A549 (cell line): ENCODE measurements at regions of chr17 and their contacts with region 1.

Region 1: DNA sequence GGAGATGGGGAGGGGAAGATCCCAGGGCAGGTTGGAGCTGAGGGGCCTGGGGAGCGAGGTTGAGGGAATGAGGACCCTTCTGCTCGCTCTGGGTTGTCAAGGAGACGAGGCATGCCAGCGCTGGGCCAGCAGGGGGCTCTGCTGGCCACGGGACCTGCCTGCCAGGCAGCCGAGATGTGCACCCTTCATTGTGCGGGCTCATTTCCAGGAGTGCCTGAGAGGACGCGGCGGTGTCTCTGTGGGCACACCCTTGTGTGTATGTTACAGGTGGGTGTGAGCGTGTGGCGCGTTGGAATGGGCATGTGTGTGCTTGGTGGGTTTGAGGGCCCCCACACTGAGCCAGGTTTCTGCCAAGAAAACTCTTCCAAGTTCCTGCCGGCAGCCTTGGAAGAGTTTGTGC is 15.9 kb downstream of the ARHGAP23 start:
- DNase-seq: peak; percentile 71 to 91
- ATAC-seq: peak; percentile 91 to 97
- H3K4me3 ChIP-seq: no peak overlapping the region
- H3K27ac ChIP-seq: peak overlapping the region in 1 of 2 experiments; percentile 59; a peak in 2 of 6 replicates
- H3K4me1 ChIP-seq: peaks cover 29% of the 10 kb centered on the region
- CTCF ChIP-seq: peak; percentile 96
- EP300 ChIP-seq: no peak
- POLR2A ChIP-seq: no peak
- RAD21 ChIP-seq: peak; percentile 98 to 99

Region 2: GRCh38 chr17:38428112-38428642 is 16.0 kb before region 1 on chr17 and contains the start of gene ARHGAP23:
- CTCF ChIA-PET with region 1: interaction called, 173 read pairs
- POLR2A ChIA-PET with region 1: no interaction called
- DNase-seq: peak; percentile 57 to 60
- ATAC-seq: peak; percentile 62 to 64
- H3K4me3 ChIP-seq: peak within 1 kb of the TSS; percentile 90
- H3K27ac ChIP-seq: peak within 1 kb of the TSS; percentile 77 to 95
- H3K4me1 ChIP-seq: peaks cover 29% of the 10 kb centered on the region
- CTCF ChIP-seq: no peak
- EP300 ChIP-seq: no peak
- POLR2A ChIP-seq: peak; percentile 40
- RAD21 ChIP-seq: no peak
- polyA plus RNA-seq, gene ARHGAP23: 4.8 and 5.5 TPM in 2 replicates

Region 3: GRCh38 chr17:38459557-38459956 is 15.4 kb after region 1 on chr17:
- CTCF ChIA-PET with region 1: interaction called, 30 read pairs
- POLR2A ChIA-PET with region 1: no interaction called
- DNase-seq: no peak
- ATAC-seq: no peak
- H3K4me3 ChIP-seq: no peak overlapping the region
- H3K27ac ChIP-seq: no peak overlapping the region
- H3K4me1 ChIP-seq: peaks cover 34% of the 10 kb centered on the region
- CTCF ChIP-seq: no peak
- EP300 ChIP-seq: no peak
- POLR2A ChIP-seq: no peak
- RAD21 ChIP-seq: no peak

Region 4: GRCh38 chr17:38469875-38470274 is 25.7 kb after region 1 on chr17:
- CTCF ChIA-PET with region 1: interaction called, 38 read pairs
- POLR2A ChIA-PET with region 1: no interaction called
- DNase-seq: no peak
- ATAC-seq: no peak
- H3K4me3 ChIP-seq: no peak overlapping the region
- H3K27ac ChIP-seq: peak overlapping the region in 1 of 2 experiments; percentile 38; a peak in 1 of 6 replicates
- H3K4me1 ChIP-seq: peaks cover 31% of the 10 kb centered on the region
- CTCF ChIP-seq: no peak
- EP300 ChIP-seq: no peak
- POLR2A ChIP-seq: no peak
- RAD21 ChIP-seq: no peak

Region 5: GRCh38 chr17:38485146-38485468 is 41.0 kb after region 1 on chr17:
- CTCF ChIA-PET with region 1: interaction called, 59 read pairs
- POLR2A ChIA-PET with region 1: no interaction called
- DNase-seq: no peak
- ATAC-seq: no peak
- H3K4me3 ChIP-seq: no peak overlapping the region
- H3K27ac ChIP-seq: no peak overlapping the region
- H3K4me1 ChIP-seq: no peaks in the 10 kb centered on the region
- CTCF ChIP-seq: no peak
- EP300 ChIP-seq: no peak
- POLR2A ChIP-seq: no peak
- RAD21 ChIP-seq: no peak